Calu3 (cell line): ENCODE measurements at regions of chr12 and their contacts with region 1.

Region 1: GRCh38 chr12:76348079-76348901 is at the start of gene BBS10:
- DNase-seq: peak; percentile 92
- H3K4me3 Mint-ChIP-seq: peak within 1 kb of the TSS; percentile 89
- H3K27ac Mint-ChIP-seq: peak within 1 kb of the TSS; percentile 85
- H3K4me1 Mint-ChIP-seq: peaks cover 25% of the 10 kb centered on the region
- H3K27me3 Mint-ChIP-seq: no peaks in the 10 kb centered on the region
- CTCF ChIP-seq: no peak
- total RNA-seq, gene BBS10: 11.7 and 13.7 TPM in 2 replicates

Region 2: GRCh38 chr12:75526655-75527511 is 821.4 kb before region 1 on chr12:
- CTCF ChIA-PET with region 1: interaction called, 4 read pairs
- intact Hi-C with region 1: loop called (anchors 1 kb)
- DNase-seq: peak; percentile 19
- H3K4me3 Mint-ChIP-seq: no peak overlapping the region
- H3K27ac Mint-ChIP-seq: peak overlapping the region; percentile 40
- H3K4me1 Mint-ChIP-seq: peaks cover 17% of the 10 kb centered on the region
- H3K27me3 Mint-ChIP-seq: no peaks in the 10 kb centered on the region
- CTCF ChIP-seq: peak; percentile 55

Region 3: DNA sequence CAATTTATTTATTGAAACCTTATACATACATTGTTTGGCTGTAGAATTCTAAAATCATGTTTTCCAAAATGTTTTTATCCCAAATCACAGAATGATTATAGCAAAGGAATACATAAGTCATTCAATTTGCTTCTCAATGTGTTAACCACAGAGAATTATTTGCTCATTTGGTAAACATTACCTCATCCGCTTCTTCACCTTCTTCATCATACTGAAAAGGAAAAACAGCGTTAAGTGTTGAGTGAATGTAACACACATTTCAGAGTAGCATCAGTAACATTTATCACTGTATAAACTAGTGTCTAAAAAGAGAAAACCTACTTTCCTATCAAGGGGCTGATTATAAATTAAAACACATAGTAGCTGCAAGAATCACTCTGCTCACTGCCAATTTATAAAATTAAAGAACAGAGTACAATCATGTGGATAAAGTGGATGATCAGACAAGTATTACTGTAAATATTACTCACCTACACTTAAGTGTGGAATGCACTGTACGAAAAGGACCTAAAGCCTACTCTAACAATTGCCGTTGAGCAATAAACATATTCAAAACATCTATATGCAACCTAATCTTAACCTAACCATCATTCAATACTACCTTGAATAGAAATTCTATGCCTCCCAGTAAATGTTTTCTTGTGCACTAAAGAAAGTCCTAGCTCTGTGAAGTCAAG is 298.6 kb before region 1 on chr12:
- CTCF ChIA-PET with region 1: no interaction called
- intact Hi-C with region 1: loop called (anchors 5 kb)
- DNase-seq: no peak
- H3K4me3 Mint-ChIP-seq: no peak overlapping the region
- H3K27ac Mint-ChIP-seq: no peak overlapping the region
- H3K4me1 Mint-ChIP-seq: no peaks in the 10 kb centered on the region
- H3K27me3 Mint-ChIP-seq: no peaks in the 10 kb centered on the region
- CTCF ChIP-seq: no peak

Region 4: GRCh38 chr12:76083904-76084862 is 264.1 kb before region 1 on chr12 and contains the start of gene NAP1L1:
- CTCF ChIA-PET with region 1: no interaction called
- intact Hi-C with region 1: loop called (anchors 2 kb)
- DNase-seq: peak; percentile 98
- H3K4me3 Mint-ChIP-seq: peak within 1 kb of the TSS; percentile 99
- H3K27ac Mint-ChIP-seq: peak within 1 kb of the TSS; percentile 97
- H3K4me1 Mint-ChIP-seq: peaks cover 31% of the 10 kb centered on the region
- H3K27me3 Mint-ChIP-seq: no peaks in the 10 kb centered on the region
- CTCF ChIP-seq: no peak
- total RNA-seq, gene NAP1L1: 394 and 467 TPM in 2 replicates

Region 5: DNA sequence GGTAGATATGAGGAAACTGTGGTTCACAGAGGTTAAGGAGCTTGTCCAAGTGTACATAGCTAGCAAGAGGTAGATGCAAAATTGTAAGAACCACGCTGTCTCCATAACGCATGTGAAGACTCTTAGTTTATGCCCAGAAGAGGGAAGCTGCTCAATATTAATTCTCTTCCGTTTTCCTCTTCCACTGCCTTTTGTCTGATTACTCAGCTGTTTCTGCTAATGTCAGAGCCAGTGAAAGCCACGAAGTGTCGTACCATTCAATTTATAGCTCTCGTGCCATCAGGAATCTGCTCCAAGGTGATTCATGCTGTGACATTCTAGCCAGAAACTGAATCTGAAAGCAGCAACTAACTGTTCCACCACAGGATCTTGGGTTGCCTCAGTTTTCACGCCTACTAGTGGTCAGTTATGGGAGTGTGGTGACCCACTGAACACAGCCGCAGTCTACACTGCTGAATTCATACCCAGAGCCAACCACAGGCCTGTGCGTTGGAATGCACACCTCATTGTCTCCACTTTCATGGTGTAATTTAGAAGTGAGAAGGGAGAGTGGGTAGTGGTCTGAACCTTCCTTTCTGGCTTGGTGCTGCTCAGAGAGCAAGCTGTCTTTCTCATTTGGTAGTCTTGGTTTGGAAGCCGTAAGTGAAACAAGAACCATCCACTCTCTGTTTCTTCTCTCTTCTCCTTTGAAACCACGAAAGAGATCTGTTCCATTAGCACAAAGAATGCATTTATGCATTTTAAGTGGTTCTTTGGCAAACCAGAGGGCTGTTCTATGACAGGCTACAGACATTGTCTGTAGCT is 189.6 kb before region 1 on chr12:
- CTCF ChIA-PET with region 1: no interaction called
- intact Hi-C with region 1: loop called (anchors 2 kb)
- DNase-seq: peak; percentile 78
- H3K4me3 Mint-ChIP-seq: peak overlapping the region; percentile 36
- H3K27ac Mint-ChIP-seq: peak overlapping the region; percentile 48
- H3K4me1 Mint-ChIP-seq: peaks cover 9% of the 10 kb centered on the region
- H3K27me3 Mint-ChIP-seq: no peaks in the 10 kb centered on the region
- CTCF ChIP-seq: peak; percentile 73

Region 6: DNA sequence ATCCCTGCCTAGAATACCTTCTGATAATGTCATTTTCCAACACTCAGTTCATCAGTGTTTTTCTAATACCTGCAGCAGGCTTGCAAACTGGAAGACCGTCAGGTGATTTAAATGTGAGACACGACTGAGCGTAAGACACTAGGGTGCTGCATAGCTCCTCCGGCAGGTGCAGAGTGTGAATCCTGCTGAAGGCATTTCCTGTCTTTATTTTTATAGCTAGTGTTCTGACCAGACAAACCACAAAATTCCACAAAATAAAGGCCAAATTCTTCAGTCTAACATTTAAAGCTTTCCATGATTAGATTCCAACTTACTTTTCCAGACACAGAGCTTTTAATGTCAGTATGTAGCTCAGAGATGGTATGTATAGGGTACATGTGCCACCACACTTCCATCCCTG is 70.8 kb before region 1 on chr12:
- CTCF ChIA-PET with region 1: no interaction called
- intact Hi-C with region 1: no loop called
- DNase-seq: no peak
- H3K4me3 Mint-ChIP-seq: no peak overlapping the region
- H3K27ac Mint-ChIP-seq: no peak overlapping the region
- H3K4me1 Mint-ChIP-seq: no peaks in the 10 kb centered on the region
- H3K27me3 Mint-ChIP-seq: no peaks in the 10 kb centered on the region
- CTCF ChIP-seq: no peak

Region 7: GRCh38 chr12:76559400-76560085 is 211.3 kb after region 1 on chr12 and contains the start of gene OSBPL8:
- CTCF ChIA-PET with region 1: no interaction called
- intact Hi-C with region 1: loop called (anchors 5 kb)
- DNase-seq: peak; percentile 97
- H3K4me3 Mint-ChIP-seq: peak within 1 kb of the TSS; percentile 90
- H3K27ac Mint-ChIP-seq: peak within 1 kb of the TSS; percentile 92
- H3K4me1 Mint-ChIP-seq: peaks cover 23% of the 10 kb centered on the region
- H3K27me3 Mint-ChIP-seq: no peaks in the 10 kb centered on the region
- CTCF ChIP-seq: no peak
- total RNA-seq, gene OSBPL8: 62.0 and 64.9 TPM in 2 replicates

Region 8: GRCh38 chr12:76586764-76587395 is 238.6 kb after region 1 on chr12:
- CTCF ChIA-PET with region 1: interaction called, 5 read pairs
- intact Hi-C with region 1: loop called (anchors 5 kb)
- DNase-seq: peak; percentile 41
- H3K4me3 Mint-ChIP-seq: no peak overlapping the region
- H3K27ac Mint-ChIP-seq: no peak overlapping the region
- H3K4me1 Mint-ChIP-seq: peaks cover 8% of the 10 kb centered on the region
- H3K27me3 Mint-ChIP-seq: no peaks in the 10 kb centered on the region
- CTCF ChIP-seq: peak; percentile 40

Region 9: GRCh38 chr12:77179515-77179914 is 831.2 kb after region 1 on chr12:
- CTCF ChIA-PET with region 1: no interaction called
- intact Hi-C with region 1: no loop called
- DNase-seq: no peak
- H3K4me3 Mint-ChIP-seq: no peak overlapping the region
- H3K27ac Mint-ChIP-seq: no peak overlapping the region
- H3K4me1 Mint-ChIP-seq: no peaks in the 10 kb centered on the region
- H3K27me3 Mint-ChIP-seq: no peaks in the 10 kb centered on the region
- CTCF ChIP-seq: no peak